PC-3 (cell line): ENCODE measurements at regions of chr5 and their contacts with region 1.

Region 1: DNA sequence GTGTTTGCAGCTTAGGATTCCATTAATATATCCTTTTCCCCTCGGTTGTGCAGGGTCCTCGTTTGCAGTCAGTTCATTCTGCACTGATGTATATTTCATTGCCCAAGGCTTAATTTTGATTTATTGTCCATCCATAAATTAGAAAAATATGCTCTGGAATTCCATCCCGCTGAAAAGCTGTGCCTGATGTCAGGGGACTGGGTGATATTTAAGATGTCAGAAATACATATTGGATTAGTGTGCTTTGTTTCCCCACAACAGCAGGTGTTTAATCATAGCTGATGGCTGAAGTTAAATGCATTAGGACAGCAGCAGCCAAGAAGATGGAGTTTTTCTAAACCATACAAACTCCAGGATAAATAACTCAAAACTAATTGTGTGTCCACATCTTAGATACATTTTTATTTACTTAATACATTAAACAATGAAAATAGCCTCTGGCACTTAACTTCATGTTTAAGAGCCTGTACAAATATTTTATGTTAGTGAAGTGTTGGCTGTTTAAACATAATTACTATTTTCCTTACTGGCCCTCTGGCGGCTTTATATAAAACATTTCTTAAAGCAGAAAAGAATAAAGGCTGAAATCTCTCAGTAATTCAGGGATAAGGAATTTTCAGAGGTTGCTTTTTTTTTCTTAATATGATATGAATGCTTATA is 170.4 kb upstream of the TBCA start:
- DNase-seq: no peak
- ATAC-seq: peak; percentile 38
- H3K4me3 ChIP-seq: no peak overlapping the region
- H3K27ac ChIP-seq: no peak overlapping the region
- H3K4me1 ChIP-seq: no peaks in the 10 kb centered on the region
- H3K27me3 ChIP-seq: no peaks in the 10 kb centered on the region
- CTCF ChIP-seq: no peak; the same call in 1 of the 2 replicates

Region 2: GRCh38 chr5:77560677-77561263 is 385.7 kb before region 1 on chr5:
- CTCF ChIA-PET with region 1: no interaction called
- POLR2A ChIA-PET with region 1: no interaction called
- intact Hi-C with region 1: loop called (anchors 10 kb)
- DNase-seq: peak; percentile 58
- ATAC-seq: peak; percentile 54; the same call in 1 of the 2 replicates
- H3K4me3 ChIP-seq: no peak overlapping the region
- H3K27ac ChIP-seq: no peak overlapping the region
- H3K4me1 ChIP-seq: no peaks in the 10 kb centered on the region
- H3K27me3 ChIP-seq: peaks cover 6% of the 10 kb centered on the region; the same call in 1 of the 2 replicates
- CTCF ChIP-seq: peak; percentile 64

Region 3: DNA sequence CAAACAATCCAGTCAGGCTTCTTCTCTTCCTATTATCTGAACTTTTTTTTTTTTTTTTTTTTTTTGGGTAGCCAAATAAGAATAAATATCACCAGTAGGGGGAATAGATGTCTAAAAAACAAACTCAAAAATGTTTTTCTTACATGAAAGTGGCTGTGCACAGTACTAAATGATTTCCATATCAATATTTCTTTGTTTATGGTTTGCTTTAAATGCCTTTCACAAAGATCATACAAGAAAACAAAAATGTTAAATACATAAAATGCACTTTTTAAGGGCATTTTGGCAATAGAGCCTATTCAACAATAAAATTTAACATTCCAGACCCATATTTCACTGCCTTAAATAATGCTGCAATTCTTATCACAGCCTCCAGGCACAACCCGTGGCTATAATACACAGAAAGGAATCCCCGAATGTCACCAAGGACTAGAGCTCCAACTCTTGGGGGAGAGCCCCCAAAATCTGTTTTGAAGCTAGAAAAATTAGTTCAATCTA is 79.3 kb before region 1 on chr5:
- CTCF ChIA-PET with region 1: no interaction called
- POLR2A ChIA-PET with region 1: no interaction called
- intact Hi-C with region 1: loop called (anchors 1 kb)
- DNase-seq: peak; percentile 25
- ATAC-seq: peak; percentile 70
- H3K4me3 ChIP-seq: no peak overlapping the region
- H3K27ac ChIP-seq: no peak overlapping the region
- H3K4me1 ChIP-seq: no peaks in the 10 kb centered on the region
- H3K27me3 ChIP-seq: no peaks in the 10 kb centered on the region
- CTCF ChIP-seq: peak; percentile 49; the same call in 1 of the 2 replicates

Region 4: GRCh38 chr5:77882670-77883257 is 63.7 kb before region 1 on chr5:
- CTCF ChIA-PET with region 1: no interaction called
- POLR2A ChIA-PET with region 1: no interaction called
- intact Hi-C with region 1: loop called (anchors 5 kb)
- DNase-seq: peak; percentile 66
- ATAC-seq: peak; percentile 86
- H3K4me3 ChIP-seq: no peak overlapping the region
- H3K27ac ChIP-seq: peak overlapping the region; percentile 68
- H3K4me1 ChIP-seq: peaks cover 31% of the 10 kb centered on the region
- H3K27me3 ChIP-seq: no peaks in the 10 kb centered on the region
- CTCF ChIP-seq: no peak

Region 5: DNA sequence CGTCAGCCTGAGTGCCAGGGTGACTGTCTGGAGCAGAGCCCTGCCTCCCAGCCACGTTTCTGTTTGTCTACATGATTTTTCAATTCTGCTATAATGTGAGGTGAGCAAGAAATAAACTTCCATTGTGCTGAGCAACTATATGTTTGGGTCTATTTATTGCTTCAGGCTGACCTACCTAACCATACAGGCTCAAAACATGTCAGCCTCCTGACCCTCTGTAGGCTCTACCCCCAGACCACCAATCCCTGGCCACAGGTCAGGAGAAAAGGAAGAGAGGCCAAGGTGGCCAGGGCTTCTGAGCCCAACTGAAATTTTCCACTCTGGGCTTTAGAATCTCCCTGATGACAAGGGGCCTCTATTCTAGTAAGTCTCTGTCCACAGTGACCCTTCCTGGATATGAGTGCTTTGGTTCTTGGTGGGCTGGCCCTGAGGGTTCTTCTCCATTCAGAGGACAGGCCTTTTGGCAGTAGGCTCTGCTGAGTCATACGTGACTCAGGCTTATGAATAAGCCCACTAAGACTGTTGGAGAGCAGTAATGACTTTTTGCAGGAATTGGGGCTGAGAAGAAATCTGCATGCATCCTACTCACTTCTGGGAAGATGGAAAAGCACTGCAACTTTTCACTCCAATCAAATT is 53.2 kb before region 1 on chr5:
- CTCF ChIA-PET with region 1: no interaction called
- POLR2A ChIA-PET with region 1: no interaction called
- intact Hi-C with region 1: loop called (anchors 2 kb)
- DNase-seq: peak; percentile 97
- ATAC-seq: peak; percentile 97
- H3K4me3 ChIP-seq: 0 out of 2 replicates have a peak overlapping the region, but pooled peaks have one; percentile 15
- H3K27ac ChIP-seq: peak overlapping the region; percentile 92
- H3K4me1 ChIP-seq: peaks cover 26% of the 10 kb centered on the region
- H3K27me3 ChIP-seq: no peaks in the 10 kb centered on the region
- CTCF ChIP-seq: no peak

Region 6: GRCh38 chr5:77972469-77973252 is 26.1 kb after region 1 on chr5:
- CTCF ChIA-PET with region 1: no interaction called
- POLR2A ChIA-PET with region 1: no interaction called
- intact Hi-C with region 1: no loop called
- DNase-seq: no peak
- ATAC-seq: no peak
- H3K4me3 ChIP-seq: no peak overlapping the region
- H3K27ac ChIP-seq: no peak overlapping the region
- H3K4me1 ChIP-seq: no peaks in the 10 kb centered on the region
- H3K27me3 ChIP-seq: no peaks in the 10 kb centered on the region
- CTCF ChIP-seq: no peak

Region 7: DNA sequence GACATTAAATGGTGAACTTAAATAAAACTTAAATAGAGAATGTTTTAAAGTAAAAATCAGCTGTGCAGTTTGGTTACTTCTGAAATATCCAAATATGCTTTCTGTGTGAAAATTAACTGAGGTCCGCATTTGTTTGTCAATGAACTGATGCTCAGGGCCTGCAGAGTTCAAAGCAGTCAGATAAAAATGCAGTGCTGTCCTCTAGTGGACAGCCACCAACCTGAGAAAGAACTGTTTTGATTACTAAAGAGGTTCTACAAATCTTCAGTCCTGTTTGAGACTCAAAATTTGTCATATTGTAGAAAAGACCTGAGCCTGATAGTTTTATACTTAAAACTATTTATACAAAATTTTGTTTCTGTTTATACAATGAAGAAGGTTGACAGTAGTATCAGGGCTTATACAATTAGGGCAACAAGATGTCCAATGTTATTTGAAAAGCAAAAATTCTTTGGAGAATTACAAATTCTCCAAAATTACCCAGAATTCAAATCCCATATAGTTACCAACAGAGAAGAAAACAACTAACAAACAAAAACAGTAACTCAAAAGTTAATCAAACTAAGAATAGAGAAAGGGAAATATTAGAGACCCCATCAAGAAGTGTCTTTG is 62.0 kb after region 1 on chr5:
- CTCF ChIA-PET with region 1: no interaction called
- POLR2A ChIA-PET with region 1: no interaction called
- intact Hi-C with region 1: loop called (anchors 5 kb)
- DNase-seq: peak; percentile 56
- ATAC-seq: peak; percentile 55
- H3K4me3 ChIP-seq: no peak overlapping the region
- H3K27ac ChIP-seq: no peak overlapping the region
- H3K4me1 ChIP-seq: no peaks in the 10 kb centered on the region
- H3K27me3 ChIP-seq: no peaks in the 10 kb centered on the region
- CTCF ChIP-seq: peak; percentile 78

Region 8: GRCh38 chr5:78182790-78183189 is 236.3 kb after region 1 on chr5:
- CTCF ChIA-PET with region 1: no interaction called
- POLR2A ChIA-PET with region 1: no interaction called
- intact Hi-C with region 1: no loop called
- DNase-seq: no peak
- ATAC-seq: no peak
- H3K4me3 ChIP-seq: no peak overlapping the region
- H3K27ac ChIP-seq: no peak overlapping the region
- H3K4me1 ChIP-seq: no peaks in the 10 kb centered on the region
- H3K27me3 ChIP-seq: no peaks in the 10 kb centered on the region
- CTCF ChIP-seq: no peak